ENCODE measurements at regions of chr7 and their contacts with region 1.

Region 1: DNA sequence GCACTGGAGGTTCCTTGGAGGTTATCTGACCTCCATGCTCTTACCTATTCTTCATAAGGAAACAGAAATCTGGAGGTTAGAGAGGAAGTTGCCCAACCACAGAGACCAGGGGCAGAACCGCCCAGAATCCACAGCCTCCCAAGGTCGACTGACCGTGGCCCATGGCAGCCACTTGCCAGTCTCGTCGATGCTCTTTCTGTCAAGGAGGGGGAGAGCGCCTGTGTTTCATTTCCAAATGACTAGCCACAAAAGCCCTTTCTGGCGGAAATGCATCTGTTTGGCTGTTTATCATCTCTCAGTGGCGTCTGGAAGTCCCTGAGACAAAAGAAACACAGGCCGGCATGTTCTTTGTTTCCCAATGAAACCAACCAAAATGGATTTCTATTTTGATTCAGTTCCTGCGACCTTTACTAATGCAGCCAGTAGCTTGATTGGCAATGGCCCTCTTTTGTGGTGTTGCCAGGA is 2.9 kb downstream of the RAMP3 start:
- DNase-seq: no peak
- CTCF ChIP-seq: no peak

Region 2: GRCh38 chr7:44784364-44784763 is 376.1 kb before region 1 on chr7:
- in situ Hi-C with region 1: no loop called
- DNase-seq: no peak
- CTCF ChIP-seq: no peak

Region 3: GRCh38 chr7:45259966-45260646 is 99.7 kb after region 1 on chr7:
- in situ Hi-C with region 1: loop called (anchors 10 kb)
- DNase-seq: peak; percentile 83
- CTCF ChIP-seq: peak; percentile 99

Region 4: DNA sequence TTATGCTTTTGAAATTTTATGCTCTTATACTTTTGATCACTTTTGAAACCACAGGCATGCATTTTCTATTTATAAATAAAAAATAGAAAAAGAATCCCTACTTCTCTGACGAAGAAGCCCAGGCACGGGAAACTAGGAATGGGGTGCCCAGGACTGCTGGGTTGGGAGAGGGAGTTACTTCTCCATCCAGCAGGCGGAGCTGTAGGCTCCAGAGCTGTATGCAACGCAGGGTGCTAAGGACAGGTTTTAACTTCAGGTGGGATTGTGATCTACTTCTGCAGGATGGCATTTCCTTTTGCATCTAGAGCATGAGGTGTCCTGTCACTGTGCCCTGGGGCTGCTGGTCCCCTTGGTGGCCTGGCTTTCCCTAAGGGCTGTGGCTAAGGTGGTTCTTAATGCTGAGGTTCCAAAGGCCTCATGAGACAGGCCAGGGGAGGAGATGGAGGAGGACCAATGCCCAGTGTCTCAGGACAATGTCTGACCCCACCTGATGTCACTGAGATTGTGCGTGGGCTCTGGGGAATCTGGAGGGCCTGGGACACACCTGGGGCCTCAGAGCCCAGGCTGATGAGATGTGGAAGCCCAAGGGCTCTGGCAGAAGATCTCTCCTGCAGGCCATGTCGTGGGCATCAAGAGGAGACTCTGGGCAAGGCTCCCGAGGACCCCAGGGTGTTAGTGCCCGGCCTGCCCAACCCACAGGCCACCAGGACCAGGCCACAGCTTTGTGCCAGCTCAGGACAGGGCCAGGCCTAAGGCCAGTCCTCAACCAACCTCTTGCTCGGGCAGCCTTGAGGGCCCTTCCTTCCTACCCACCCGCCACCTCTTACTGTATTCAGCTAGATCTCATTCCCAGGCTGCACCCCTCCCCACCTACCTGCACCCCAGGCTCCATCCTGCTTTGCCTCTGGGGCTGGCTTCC is 711.9 kb after region 1 on chr7:
- in situ Hi-C with region 1: loop called (anchors 25 kb)
- DNase-seq: no peak
- CTCF ChIP-seq: peak; percentile 59